ENCODE measurements at regions of chr5 and their contacts with region 1.

Region 1: DNA sequence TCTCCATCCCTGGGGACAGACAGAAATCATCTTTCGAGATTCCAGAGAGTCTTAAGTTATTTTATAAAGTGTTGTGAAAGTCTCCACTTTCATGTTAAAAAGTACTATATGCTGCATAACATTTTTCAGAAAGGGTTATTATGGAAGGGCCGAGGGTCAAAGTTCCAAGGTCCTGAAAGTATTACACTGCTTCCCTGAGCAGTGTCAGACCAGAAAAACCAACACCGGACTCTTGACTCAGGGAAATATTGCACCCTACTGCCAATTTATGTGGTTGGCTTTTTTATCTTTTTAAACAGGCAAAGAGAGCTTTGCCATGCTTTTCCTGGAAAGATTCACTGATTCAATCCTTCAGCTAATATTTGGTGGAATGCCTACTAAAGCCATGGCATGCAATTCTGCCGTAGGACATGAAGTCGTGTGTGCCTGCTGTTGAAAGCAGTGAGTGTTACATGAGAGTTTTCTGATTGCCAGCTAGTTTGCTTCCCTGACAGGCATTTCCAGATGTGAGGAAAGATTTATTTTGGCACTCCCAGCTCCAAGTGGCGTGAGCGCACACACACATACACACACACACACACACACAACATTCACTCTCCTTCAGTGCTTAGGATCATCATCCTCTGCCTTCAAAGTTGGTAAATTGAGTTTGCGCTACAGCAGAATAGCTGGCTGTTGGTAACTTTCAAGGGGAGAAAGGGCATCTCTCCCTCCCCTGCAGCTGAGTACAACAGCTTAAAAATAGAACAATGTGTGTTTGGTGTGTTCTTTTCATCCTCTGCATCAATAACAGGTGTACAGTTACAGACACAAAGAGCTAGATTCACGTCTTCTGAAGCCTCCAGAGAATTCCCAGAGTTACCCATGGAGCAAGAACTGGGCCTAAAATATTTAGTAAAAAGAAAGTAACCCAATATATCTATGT is 45.6 kb downstream of the SLC1A3 start:
- DNase-seq: no peak
- ATAC-seq: peak; percentile 71

Region 2: DNA sequence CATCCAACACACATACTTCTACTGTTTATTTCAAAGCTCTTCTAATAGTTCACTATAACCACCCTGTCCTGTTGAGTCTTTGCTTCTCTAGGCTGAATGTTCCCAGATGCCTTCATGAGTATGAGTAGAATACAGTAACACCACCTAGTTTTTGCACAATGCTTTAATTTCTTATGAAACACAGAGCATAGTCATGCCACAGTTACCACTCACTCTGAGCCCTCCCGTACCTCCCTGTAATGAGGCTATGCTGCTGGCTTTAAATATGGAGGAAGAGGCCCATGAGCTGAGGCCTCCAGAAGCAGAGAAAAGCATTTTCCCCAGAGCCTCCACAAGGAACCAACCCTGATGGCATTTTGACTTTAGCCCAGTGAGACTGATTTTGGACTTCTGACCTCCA is 120.6 kb before region 1 on chr5:
- intact Hi-C with region 1: loop called (anchors 1 kb)
- DNase-seq: no peak
- ATAC-seq: no peak

Region 3: GRCh38 chr5:36988396-36988795 is 336.4 kb after region 1 on chr5:
- intact Hi-C with region 1: no loop called
- DNase-seq: no peak
- ATAC-seq: no peak

Measured in Right ventricle myocardium inferior (tissue), 1 donor.